MCF 10A (cell line): ENCODE measurements at regions of chr18 and their contacts with region 1.

Region 1: DNA sequence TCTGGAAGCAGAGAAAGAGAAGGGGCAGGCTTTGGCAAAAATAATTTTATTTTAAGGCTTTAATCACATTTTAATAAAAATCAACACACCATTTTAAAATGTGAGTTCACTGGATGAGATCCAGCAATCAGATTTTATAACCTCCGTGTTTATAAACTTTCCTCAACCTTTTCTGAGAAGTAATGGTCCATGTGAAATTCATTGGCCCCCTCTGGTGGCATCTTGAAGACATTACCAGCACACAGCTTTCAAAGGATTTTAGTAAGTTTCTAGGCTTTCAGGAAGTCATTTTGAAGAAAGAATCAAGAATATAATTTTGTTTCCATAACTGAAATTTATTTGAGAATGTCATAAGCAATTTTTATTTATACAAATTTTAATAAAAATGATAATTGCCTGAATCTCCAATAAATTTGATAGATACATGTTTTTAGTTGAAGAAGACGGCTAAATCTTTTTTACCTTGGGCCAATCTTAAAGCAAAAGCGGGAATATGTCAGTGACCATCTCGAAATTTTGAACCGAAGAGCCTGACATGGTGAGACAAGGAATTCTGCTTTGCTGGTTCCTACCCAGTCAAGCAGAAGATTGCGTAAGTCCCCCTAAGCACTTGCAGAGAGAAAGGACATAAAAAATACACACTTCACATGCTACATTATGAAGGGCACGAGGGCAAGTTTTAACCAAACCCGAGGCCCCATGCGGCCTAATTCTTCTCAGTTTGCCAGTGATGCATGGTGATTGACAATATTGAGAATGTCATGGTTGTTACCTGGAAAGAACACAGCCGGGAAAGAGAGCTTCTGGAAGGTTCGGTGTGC is 128.4 kb upstream of the CBLN2 start:
- DNase-seq: peak; percentile 56
- H3K4me3 Mint-ChIP-seq: no peak overlapping the region
- H3K27ac Mint-ChIP-seq: no peak overlapping the region
- H3K4me1 Mint-ChIP-seq: no peaks in the 10 kb centered on the region
- H3K27me3 Mint-ChIP-seq: no peaks in the 10 kb centered on the region
- CTCF ChIP-seq: peak; percentile 65

Region 2: GRCh38 chr18:72652990-72653593 is 19.5 kb before region 1 on chr18:
- CTCF ChIA-PET with region 1: interaction called, 5 read pairs
- POLR2A ChIA-PET with region 1: no interaction called
- intact Hi-C with region 1: loop called (anchors 1 kb)
- DNase-seq: peak; percentile 65
- H3K4me3 Mint-ChIP-seq: no peak overlapping the region
- H3K27ac Mint-ChIP-seq: no peak overlapping the region
- H3K4me1 Mint-ChIP-seq: no peaks in the 10 kb centered on the region
- H3K27me3 Mint-ChIP-seq: peaks cover 14% of the 10 kb centered on the region
- CTCF ChIP-seq: peak; percentile 43

Region 3: DNA sequence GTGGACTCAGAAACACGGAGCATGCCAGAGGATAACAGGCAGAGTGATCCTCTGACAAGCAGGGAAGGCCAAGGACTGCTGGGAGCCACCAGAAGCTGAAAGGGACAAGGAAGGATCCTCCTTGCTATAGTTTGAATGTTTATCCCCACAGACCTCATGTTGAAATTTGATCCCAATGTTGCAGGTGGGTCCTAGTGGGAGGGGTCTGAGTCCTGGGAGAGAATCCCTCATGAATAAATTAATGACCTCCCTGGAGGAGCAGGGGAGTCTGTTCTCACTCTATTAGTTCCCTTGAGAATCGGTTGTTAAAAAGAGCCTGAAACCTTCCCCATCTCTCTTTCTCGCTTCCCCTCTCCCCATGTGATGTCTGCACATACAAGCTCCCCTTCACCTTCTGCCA is 1350.6 kb after region 1 on chr18:
- CTCF ChIA-PET with region 1: no interaction called
- POLR2A ChIA-PET with region 1: no interaction called
- intact Hi-C with region 1: no loop called
- DNase-seq: no peak
- H3K4me3 Mint-ChIP-seq: no peak overlapping the region
- H3K27ac Mint-ChIP-seq: no peak overlapping the region
- H3K4me1 Mint-ChIP-seq: no peaks in the 10 kb centered on the region
- H3K27me3 Mint-ChIP-seq: no peaks in the 10 kb centered on the region
- CTCF ChIP-seq: no peak